ENCODE measurements at regions of chr14 and their contacts with region 1.

Region 1: DNA sequence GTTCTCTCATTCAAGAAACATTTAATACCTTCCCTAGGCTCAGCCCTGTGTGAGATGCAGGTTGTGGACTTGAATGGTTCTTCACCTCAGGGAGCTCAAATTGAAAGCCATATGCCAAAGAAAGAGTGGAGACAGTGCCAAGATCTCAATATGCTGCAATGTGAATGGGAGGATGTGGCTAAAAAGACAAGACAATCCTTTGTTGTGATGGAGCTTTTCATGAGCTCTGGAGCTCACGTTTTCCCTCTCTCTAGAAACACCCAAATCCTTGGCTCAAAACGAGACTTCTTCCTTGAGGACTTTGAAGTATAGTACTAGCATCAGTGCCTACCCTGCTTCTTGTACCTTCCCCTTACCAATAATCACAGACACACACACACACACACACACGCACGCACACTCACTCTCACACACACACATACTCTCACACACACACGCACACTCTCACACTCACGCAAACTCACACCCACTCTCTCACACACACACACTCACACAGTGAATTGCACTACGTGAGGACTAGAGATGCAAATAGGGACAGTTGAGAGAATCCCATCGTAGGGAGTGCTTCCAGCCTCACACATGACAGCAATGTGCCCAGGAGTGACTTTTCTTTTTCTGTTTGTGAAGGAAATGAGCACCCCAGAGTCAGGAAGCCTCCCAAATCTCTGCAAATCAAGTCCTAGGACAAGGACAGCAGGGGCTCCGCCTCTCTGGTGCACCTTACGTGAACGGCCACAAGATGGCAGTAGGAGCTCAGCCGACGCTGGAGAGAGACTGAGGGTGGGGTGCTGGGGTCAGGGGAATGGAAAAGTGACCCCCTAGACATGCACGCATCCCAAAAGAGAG is 231.4 kb downstream of the PCNX1 start:
- DNase-seq: peak; percentile 81
- ATAC-seq: peak; percentile 85

Region 2: GRCh38 chr14:71753126-71753830 is 614.6 kb after region 1 on chr14:
- intact Hi-C with region 1: loop called (anchors 5 kb)
- DNase-seq: peak; percentile 96
- ATAC-seq: peak; percentile 93

Measured in sciatic nerve (tissue), 2 donors.